ENCODE measurements at regions of chr6 and their contacts with region 1.

Region 1: GRCh38 chr6:152982768-152983636 is at the start of gene FBXO5:
- DNase-seq: peak; percentile 98
- H3K4me3 Mint-ChIP-seq: peak within 1 kb of the TSS; percentile 97
- H3K27ac Mint-ChIP-seq: peak within 1 kb of the TSS; percentile 100
- H3K4me1 Mint-ChIP-seq: peaks cover 38% of the 10 kb centered on the region
- H3K27me3 Mint-ChIP-seq: no peaks in the 10 kb centered on the region
- total RNA-seq, gene FBXO5: 41.8 to 42.7 TPM

Region 2: DNA sequence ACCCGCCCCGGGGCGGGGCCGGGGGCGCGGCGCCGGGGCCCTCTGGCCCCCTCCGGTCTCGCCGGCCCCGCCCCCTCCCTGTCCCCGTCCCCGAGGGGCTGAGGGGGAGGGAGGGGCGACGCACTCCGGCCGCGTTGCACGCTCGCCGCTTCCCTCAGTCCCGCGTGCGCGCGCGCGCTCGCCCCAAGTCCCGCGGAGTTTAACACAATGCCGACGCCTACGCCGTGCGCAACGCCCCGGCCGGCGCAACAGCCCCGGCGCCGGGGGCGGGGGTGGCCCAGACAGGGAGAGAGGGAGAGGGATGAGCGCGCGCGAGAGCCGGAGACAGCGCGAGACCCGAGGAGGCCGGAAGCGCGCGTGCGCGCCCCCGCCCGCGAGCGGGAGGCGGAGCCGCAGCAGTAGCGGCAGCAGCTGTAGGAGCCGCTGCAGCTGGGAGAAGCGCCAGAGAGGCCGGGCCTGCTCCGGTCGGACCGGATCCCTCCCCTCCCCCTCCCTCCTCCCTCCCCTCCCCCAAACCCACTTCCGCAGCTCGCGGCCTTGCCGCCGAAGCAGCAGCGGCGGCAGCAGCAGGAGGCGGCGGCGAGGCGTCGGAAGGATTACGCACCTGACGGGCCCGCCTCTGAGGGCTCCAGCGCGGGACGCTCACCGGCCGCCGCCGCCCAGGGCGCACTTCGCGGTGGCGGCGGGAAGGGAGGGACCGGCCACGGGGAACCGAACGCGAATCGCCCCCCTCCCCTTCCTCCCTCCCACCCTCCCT is 1592.5 kb before region 1 on chr6:
- CTCF ChIA-PET with region 1: no interaction called
- POLR2A ChIA-PET with region 1: interaction called, 3 read pairs
- intact Hi-C with region 1: loop called (anchors 2 kb)
- DNase-seq: peak; percentile 99
- H3K4me3 Mint-ChIP-seq: peak overlapping the region; percentile 98
- H3K27ac Mint-ChIP-seq: peak overlapping the region; percentile 72
- H3K4me1 Mint-ChIP-seq: peaks cover 63% of the 10 kb centered on the region
- H3K27me3 Mint-ChIP-seq: no peaks in the 10 kb centered on the region

Region 3: GRCh38 chr6:151702851-151703611 is 1280.0 kb before region 1 on chr6:
- CTCF ChIA-PET with region 1: no interaction called
- POLR2A ChIA-PET with region 1: no interaction called
- intact Hi-C with region 1: loop called (anchors 5 kb)
- DNase-seq: no peak
- H3K4me3 Mint-ChIP-seq: no peak overlapping the region
- H3K27ac Mint-ChIP-seq: peak overlapping the region; percentile 56
- H3K4me1 Mint-ChIP-seq: peaks cover 44% of the 10 kb centered on the region
- H3K27me3 Mint-ChIP-seq: peaks cover 6% of the 10 kb centered on the region

Region 4: GRCh38 chr6:152301764-152302568 is 681.0 kb before region 1 on chr6:
- CTCF ChIA-PET with region 1: no interaction called
- POLR2A ChIA-PET with region 1: no interaction called
- intact Hi-C with region 1: loop called (anchors 5 kb)
- DNase-seq: peak; percentile 94
- H3K4me3 Mint-ChIP-seq: peak overlapping the region; percentile 99
- H3K27ac Mint-ChIP-seq: peak overlapping the region; percentile 95
- H3K4me1 Mint-ChIP-seq: peaks cover 31% of the 10 kb centered on the region
- H3K27me3 Mint-ChIP-seq: no peaks in the 10 kb centered on the region

Region 5: DNA sequence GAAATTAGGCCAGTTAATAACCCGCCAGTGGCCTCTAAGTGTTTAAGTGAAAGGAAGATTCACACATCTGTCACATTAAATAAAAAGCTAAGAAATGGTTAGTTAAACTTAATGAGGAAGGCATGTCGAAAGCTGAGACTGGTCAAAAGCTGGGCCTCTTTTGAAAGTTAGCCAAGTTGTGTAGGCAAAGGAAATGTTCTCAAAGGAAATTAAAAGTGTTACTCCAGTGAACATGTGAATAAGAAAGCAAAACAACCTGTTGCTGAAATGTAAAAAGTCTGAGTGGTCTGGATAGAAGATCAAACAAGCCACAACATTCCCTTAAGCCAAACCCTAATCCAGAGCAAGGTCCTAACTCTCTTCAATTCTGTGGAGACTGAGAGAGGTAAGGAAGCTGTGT is 30.4 kb after region 1 on chr6:
- CTCF ChIA-PET with region 1: no interaction called
- POLR2A ChIA-PET with region 1: no interaction called
- intact Hi-C with region 1: no loop called
- DNase-seq: no peak
- H3K4me3 Mint-ChIP-seq: no peak overlapping the region
- H3K27ac Mint-ChIP-seq: no peak overlapping the region
- H3K4me1 Mint-ChIP-seq: no peaks in the 10 kb centered on the region
- H3K27me3 Mint-ChIP-seq: peaks cover 24% of the 10 kb centered on the region

Region 6: GRCh38 chr6:153023977-153024708 is 41.1 kb after region 1 on chr6:
- CTCF ChIA-PET with region 1: no interaction called
- POLR2A ChIA-PET with region 1: no interaction called
- intact Hi-C with region 1: loop called (anchors 2 kb)
- DNase-seq: peak; percentile 41
- H3K4me3 Mint-ChIP-seq: no peak overlapping the region
- H3K27ac Mint-ChIP-seq: no peak overlapping the region
- H3K4me1 Mint-ChIP-seq: peaks cover 5% of the 10 kb centered on the region
- H3K27me3 Mint-ChIP-seq: peaks cover 14% of the 10 kb centered on the region

Region 7: DNA sequence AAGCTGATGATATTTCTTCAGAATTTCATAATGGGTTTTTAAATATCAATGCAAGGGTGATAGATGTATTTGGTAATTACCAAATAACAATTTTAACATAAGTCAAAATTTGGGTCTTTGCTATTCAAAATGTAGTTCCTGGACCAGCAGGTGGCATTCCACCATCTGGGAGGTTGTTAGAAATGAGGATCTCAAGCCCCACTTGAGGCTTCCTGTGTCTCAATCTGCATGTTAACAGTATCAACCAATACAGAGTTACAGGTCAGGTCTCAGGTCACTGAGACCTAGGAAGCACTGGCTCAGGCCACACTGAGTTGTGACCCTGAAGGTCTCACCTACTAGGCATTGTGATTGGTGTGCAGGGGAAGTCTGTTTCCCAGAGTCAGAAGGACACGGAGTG is 76.8 kb after region 1 on chr6:
- CTCF ChIA-PET with region 1: no interaction called
- POLR2A ChIA-PET with region 1: no interaction called
- intact Hi-C with region 1: no loop called
- DNase-seq: no peak
- H3K4me3 Mint-ChIP-seq: no peak overlapping the region
- H3K27ac Mint-ChIP-seq: no peak overlapping the region
- H3K4me1 Mint-ChIP-seq: no peaks in the 10 kb centered on the region
- H3K27me3 Mint-ChIP-seq: peaks cover 15% of the 10 kb centered on the region

Region 8: DNA sequence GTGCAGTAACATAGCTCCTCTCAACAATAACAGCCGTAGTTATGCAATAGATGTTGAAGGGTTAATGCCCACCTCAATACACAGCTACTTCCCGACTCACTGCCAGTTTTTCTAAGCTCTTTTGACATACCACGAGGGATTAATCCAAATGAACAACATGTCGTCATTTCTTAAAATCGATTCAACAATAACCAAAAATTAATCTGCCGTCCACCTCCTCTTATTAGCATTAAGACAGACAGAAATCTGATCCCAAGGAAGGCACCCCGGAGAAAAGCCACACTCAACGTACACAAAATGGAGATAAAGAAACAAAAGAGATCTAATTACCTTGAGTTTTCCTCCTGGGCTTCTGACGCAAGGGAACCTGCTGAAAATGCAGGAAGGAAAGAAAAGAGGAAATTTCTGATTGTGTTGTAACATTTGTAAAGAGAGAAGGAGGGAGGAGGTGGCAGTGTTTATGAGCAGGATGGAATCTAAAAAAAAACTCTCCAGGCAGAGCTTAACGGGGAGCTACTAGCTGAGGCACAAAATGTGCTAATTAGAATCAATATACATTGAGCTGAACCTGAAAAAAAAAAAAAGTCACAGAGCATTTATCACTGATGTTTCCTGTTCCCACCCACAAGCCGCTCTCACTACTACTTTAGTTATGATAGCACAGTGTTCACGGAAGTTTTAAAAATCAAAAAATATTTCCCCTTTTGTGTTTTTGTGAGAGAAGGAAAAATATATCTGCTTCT is 1264.3 kb after region 1 on chr6:
- CTCF ChIA-PET with region 1: no interaction called
- POLR2A ChIA-PET with region 1: no interaction called
- intact Hi-C with region 1: loop called (anchors 5 kb)
- DNase-seq: peak; percentile 55
- H3K4me3 Mint-ChIP-seq: peak overlapping the region; percentile 87
- H3K27ac Mint-ChIP-seq: peak overlapping the region; percentile 79
- H3K4me1 Mint-ChIP-seq: peaks cover 80% of the 10 kb centered on the region
- H3K27me3 Mint-ChIP-seq: no peaks in the 10 kb centered on the region